GM10248 (cell line): ENCODE measurements at regions of chr20 and their contacts with region 1.

Region 1: DNA sequence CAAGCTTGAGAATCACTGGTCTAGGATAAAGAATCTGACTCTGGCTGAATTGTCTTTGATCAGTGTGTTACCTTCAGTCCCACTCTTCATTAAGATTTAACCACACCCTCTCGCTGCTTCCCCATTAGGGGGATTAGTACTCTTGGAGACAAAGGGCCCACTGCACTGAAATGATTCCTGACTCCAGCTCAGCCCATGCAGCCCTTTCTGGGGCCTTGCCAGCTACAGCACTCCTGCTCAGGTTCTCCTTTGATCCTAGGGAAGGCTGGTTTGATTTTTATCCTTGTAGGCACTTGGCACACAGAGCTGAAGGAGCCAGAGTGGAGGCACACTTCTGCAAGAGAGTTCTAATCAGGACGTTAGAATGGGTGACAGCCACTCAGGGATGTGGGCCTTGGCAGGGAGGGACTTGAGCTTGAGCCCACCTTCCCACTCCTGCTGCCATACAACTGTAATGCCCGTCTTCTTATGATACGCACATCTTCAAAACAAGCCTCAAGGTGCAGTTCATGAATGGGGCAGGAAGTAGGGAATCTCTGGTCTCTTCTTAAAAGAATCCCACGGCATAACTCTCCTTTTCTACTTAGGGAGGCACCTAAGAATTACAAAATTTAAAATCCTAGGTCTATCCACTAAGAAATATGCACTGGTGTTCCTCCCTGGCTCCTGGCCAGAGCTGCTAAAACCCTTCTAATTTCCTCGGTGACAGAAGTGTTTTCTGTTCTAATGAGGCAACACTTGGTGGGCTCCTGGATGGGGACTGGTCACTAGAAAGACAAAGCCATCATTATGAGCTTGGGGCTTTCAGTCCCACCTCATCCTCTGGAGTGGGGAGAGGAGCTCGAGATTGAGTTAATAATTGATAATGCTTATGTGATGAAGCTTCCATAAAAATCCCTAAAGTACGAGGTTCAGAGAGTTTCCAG is 1.5 kb upstream of the SLA2 start:
- DNase-seq: no peak
- CTCF ChIP-seq: no peak

Region 2: DNA sequence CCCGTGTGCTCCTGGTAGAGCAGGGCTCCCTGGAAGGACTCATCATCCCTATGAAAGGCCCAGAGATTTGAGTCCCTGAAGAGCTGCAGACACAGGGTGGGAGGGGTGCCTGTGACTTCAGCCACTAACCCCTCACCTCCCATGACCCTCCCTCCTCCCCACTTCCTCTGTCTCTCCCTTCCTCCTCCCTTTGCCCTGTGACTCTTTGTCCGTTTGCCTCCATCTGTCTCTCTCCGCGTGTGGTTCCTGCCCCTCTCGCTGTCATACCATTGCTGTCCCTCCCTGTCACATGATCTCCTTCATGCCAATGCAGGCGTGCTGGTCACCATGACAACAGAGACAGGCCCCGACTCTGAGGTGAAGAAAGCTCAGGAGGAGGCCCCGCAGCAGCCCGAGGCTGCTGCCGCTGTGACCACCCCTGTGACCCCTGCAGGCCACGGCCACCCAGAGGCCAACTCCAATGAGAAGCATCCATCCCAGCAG is 474.0 kb before region 1 on chr20:
- CTCF ChIA-PET with region 1: no interaction called
- POLR2A ChIA-PET with region 1: no interaction called
- DNase-seq: no peak
- CTCF ChIP-seq: no peak

Region 3: GRCh38 chr20:36666181-36666740 is 18.8 kb after region 1 on chr20:
- CTCF ChIA-PET with region 1: interaction called, 11 read pairs
- POLR2A ChIA-PET with region 1: no interaction called
- DNase-seq: no peak
- CTCF ChIP-seq: peak; percentile 29

Region 4: GRCh38 chr20:36682311-36682710 is 34.9 kb after region 1 on chr20:
- CTCF ChIA-PET with region 1: no interaction called
- POLR2A ChIA-PET with region 1: no interaction called
- DNase-seq: no peak
- CTCF ChIP-seq: no peak